OCI-LY7 (cell line): ENCODE measurements at regions of chr6 and their contacts with region 1.

Region 1: DNA sequence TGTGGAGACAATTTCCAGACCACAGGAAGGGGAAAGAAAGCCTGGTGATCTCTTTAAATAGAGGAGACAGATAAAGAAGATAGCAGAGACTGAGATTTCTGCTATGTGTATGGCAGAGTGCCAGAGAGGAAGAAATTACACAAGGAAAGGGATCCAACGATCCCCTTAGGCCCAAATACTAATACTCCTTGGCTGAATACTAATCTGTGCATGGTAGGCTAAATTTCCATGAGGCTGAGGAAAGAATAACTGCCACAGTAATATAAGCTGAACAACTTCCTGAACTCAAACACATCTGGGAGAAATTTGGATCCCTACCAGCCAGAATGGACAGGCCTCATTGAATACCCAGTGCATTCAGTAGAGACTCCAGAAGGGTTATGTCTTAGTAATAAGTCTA is 83.3 kb upstream of the TNFAIP3 start:
- DNase-seq: no peak
- H3K4me3 ChIP-seq: no peak overlapping the region
- H3K27ac ChIP-seq: no peak overlapping the region
- H3K4me1 ChIP-seq: no peaks in the 10 kb centered on the region
- CTCF ChIP-seq: no peak

Region 2: GRCh38 chr6:137799950-137800568 is 16.3 kb after region 1 on chr6:
- CTCF ChIA-PET with region 1: no interaction called
- POLR2A ChIA-PET with region 1: interaction called, 10 read pairs
- intact Hi-C with region 1: no loop called
- DNase-seq: peak; percentile 66
- H3K4me3 ChIP-seq: no peak overlapping the region
- H3K27ac ChIP-seq: no peak overlapping the region
- H3K4me1 ChIP-seq: no peaks in the 10 kb centered on the region
- CTCF ChIP-seq: peak; percentile 84

Region 3: GRCh38 chr6:138287144-138287955 is 503.6 kb after region 1 on chr6:
- CTCF ChIA-PET with region 1: no interaction called
- POLR2A ChIA-PET with region 1: no interaction called
- intact Hi-C with region 1: no loop called
- DNase-seq: peak; percentile 48
- H3K4me3 ChIP-seq: no peak overlapping the region
- H3K27ac ChIP-seq: no peak overlapping the region
- H3K4me1 ChIP-seq: no peaks in the 10 kb centered on the region
- CTCF ChIP-seq: peak; percentile 81